ENCODE measurements at regions of chr4 and their contacts with region 1.

Region 1: GRCh38 chr4:101724093-101724492 is 66.4 kb upstream of the BANK1 start:
- DNase-seq: no peak
- H3K4me3 ChIP-seq: no peak overlapping the region
- H3K27ac ChIP-seq: no peak overlapping the region
- H3K4me1 ChIP-seq: no peaks in the 10 kb centered on the region
- H3K27me3 ChIP-seq: no peaks in the 10 kb centered on the region
- CTCF ChIP-seq: no peak

Region 2: GRCh38 chr4:100913685-100914084 is 810.4 kb before region 1 on chr4:
- CTCF ChIA-PET with region 1: no interaction called
- POLR2A ChIA-PET with region 1: no interaction called
- intact Hi-C with region 1: loop called (anchors 10 kb)
- DNase-seq: peak; percentile 42
- H3K4me3 ChIP-seq: no peak overlapping the region
- H3K27ac ChIP-seq: no peak overlapping the region
- H3K4me1 ChIP-seq: no peaks in the 10 kb centered on the region
- H3K27me3 ChIP-seq: no peaks in the 10 kb centered on the region
- CTCF ChIP-seq: no peak

Region 3: DNA sequence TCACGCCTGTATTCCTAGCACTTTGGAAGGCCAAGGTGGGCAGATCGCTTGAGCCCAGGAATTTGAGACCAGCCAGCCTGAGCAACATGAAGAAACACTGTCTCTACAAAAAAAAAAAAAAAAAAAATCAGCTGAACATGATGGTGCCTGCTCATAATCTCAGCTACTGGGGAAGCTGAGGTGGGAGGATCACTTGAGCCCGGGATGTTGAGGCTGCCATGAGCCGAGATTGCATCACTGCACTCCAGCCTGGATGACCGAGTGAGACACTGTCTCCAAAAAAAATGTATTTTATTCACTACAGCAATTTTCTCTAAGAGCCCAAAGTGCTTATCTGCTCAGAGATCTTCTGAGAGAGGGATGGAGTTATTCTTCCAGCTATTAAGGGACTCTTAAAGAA is 161.0 kb before region 1 on chr4:
- CTCF ChIA-PET with region 1: no interaction called
- POLR2A ChIA-PET with region 1: no interaction called
- intact Hi-C with region 1: no loop called
- DNase-seq: no peak
- H3K4me3 ChIP-seq: no peak overlapping the region
- H3K27ac ChIP-seq: no peak overlapping the region
- H3K4me1 ChIP-seq: no peaks in the 10 kb centered on the region
- H3K27me3 ChIP-seq: no peaks in the 10 kb centered on the region
- CTCF ChIP-seq: no peak

Region 4: DNA sequence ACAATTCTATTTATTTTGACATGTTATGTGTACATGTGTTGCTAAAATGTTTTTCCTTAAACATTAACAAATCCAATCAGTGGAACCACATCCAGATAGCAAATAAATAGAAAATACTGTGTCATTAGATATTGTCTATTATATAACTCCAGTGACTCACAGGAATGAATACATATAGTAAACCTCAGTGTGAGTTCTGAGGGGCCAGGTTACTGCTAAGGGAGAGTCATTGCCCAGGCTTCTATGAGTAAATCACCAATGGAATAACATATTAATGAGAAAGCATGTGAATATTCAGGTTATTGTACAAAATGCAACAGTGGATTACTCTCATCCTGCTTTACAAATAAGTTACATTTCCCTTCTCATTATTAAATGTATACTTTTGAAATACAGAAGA is 1968.5 kb after region 1 on chr4:
- CTCF ChIA-PET with region 1: no interaction called
- POLR2A ChIA-PET with region 1: no interaction called
- intact Hi-C with region 1: no loop called
- DNase-seq: no peak
- H3K4me3 ChIP-seq: no peak overlapping the region
- H3K27ac ChIP-seq: no peak overlapping the region
- H3K4me1 ChIP-seq: no peaks in the 10 kb centered on the region
- H3K27me3 ChIP-seq: no peaks in the 10 kb centered on the region
- CTCF ChIP-seq: no peak